ENCODE measurements at regions of chr9 and their contacts with region 1.

Region 1: GRCh38 chr9:15873569-15874177 is 320.8 kb downstream of the CCDC171 start:
- DNase-seq: peak; percentile 67
- H3K4me3 Mint-ChIP-seq: no peak overlapping the region
- H3K27ac Mint-ChIP-seq: no peak overlapping the region
- H3K4me1 Mint-ChIP-seq: peaks cover 9% of the 10 kb centered on the region
- H3K27me3 Mint-ChIP-seq: no peaks in the 10 kb centered on the region
- CTCF ChIP-seq: peak; percentile 51

Region 2: DNA sequence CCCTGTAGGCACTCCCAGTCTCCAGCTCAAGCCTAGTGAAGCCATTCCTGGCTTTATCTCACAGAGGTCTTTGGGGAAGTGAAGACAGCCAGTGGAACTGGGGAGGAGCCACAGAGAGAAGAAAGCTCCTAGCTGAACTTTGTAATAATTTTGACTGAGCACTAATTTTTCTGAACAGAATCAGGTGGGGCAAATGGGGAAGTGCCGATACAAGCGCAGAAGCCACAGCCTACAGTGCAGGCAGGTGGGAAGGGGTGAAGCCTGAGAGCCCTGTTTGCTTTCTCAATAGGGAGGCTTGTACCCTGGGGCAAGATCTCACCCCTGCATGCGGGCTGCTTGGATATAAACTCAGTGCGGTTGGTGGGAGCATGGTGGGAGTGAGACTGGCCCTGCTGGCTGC is 499.3 kb before region 1 on chr9:
- CTCF ChIA-PET with region 1: no interaction called
- POLR2A ChIA-PET with region 1: no interaction called
- intact Hi-C with region 1: no loop called
- DNase-seq: no peak
- H3K4me3 Mint-ChIP-seq: no peak overlapping the region
- H3K27ac Mint-ChIP-seq: no peak overlapping the region
- H3K4me1 Mint-ChIP-seq: no peaks in the 10 kb centered on the region
- H3K27me3 Mint-ChIP-seq: no peaks in the 10 kb centered on the region
- CTCF ChIP-seq: no peak

Region 3: GRCh38 chr9:15697446-15697851 is 176.2 kb before region 1 on chr9:
- CTCF ChIA-PET with region 1: no interaction called
- POLR2A ChIA-PET with region 1: no interaction called
- intact Hi-C with region 1: no loop called
- DNase-seq: peak; percentile 86
- H3K4me3 Mint-ChIP-seq: no peak overlapping the region
- H3K27ac Mint-ChIP-seq: peak overlapping the region; percentile 81
- H3K4me1 Mint-ChIP-seq: peaks cover 17% of the 10 kb centered on the region
- H3K27me3 Mint-ChIP-seq: no peaks in the 10 kb centered on the region
- CTCF ChIP-seq: no peak

Region 4: GRCh38 chr9:16133556-16134227 is 260.0 kb after region 1 on chr9:
- CTCF ChIA-PET with region 1: interaction called, 18 read pairs
- POLR2A ChIA-PET with region 1: no interaction called
- intact Hi-C with region 1: loop called (anchors 1 kb)
- DNase-seq: peak; percentile 89
- H3K4me3 Mint-ChIP-seq: no peak overlapping the region
- H3K27ac Mint-ChIP-seq: no peak overlapping the region
- H3K4me1 Mint-ChIP-seq: peaks cover 11% of the 10 kb centered on the region
- H3K27me3 Mint-ChIP-seq: no peaks in the 10 kb centered on the region
- CTCF ChIP-seq: peak; percentile 72

Region 5: DNA sequence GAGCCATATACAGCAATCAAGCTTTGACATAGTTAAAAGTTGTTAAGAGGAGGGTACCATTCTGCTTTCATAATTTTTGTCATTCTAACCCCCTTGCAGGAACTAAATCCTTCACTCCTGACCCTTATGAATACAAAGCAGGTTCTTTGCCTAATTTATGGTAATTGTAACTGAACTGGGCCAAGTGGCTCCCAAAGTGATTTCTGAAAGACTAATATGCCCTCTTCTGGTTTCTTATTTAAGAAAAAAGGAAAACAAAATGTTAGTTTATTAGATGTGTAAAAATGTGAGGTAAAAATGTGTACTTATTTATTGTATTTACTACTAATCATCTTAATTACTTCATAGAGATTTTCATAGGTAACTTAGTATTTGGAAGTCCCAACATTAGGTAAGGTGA is 728.3 kb after region 1 on chr9:
- CTCF ChIA-PET with region 1: interaction called, 4 read pairs
- POLR2A ChIA-PET with region 1: no interaction called
- intact Hi-C with region 1: loop called (anchors 2 kb)
- DNase-seq: peak; percentile 5
- H3K4me3 Mint-ChIP-seq: no peak overlapping the region
- H3K27ac Mint-ChIP-seq: no peak overlapping the region
- H3K4me1 Mint-ChIP-seq: no peaks in the 10 kb centered on the region
- H3K27me3 Mint-ChIP-seq: no peaks in the 10 kb centered on the region
- CTCF ChIP-seq: peak; percentile 12

Region 6: GRCh38 chr9:16726718-16727451 is 853.2 kb after region 1 on chr9:
- CTCF ChIA-PET with region 1: no interaction called
- POLR2A ChIA-PET with region 1: no interaction called
- intact Hi-C with region 1: loop called (anchors 10 kb)
- DNase-seq: peak; percentile 85
- H3K4me3 Mint-ChIP-seq: peak overlapping the region; percentile 78
- H3K27ac Mint-ChIP-seq: no peak overlapping the region
- H3K4me1 Mint-ChIP-seq: peaks cover 5% of the 10 kb centered on the region
- H3K27me3 Mint-ChIP-seq: peaks cover 21% of the 10 kb centered on the region
- CTCF ChIP-seq: no peak